Right ventricle myocardium superior (tissue), 1 donor: ENCODE measurements at regions of chr18 and their contacts with region 1.

Region 1: GRCh38 chr18:24118750-24119577 is 19.9 kb upstream of the CABYR start:
- DNase-seq: peak; percentile 69
- ATAC-seq: peak; percentile 88

Region 2: DNA sequence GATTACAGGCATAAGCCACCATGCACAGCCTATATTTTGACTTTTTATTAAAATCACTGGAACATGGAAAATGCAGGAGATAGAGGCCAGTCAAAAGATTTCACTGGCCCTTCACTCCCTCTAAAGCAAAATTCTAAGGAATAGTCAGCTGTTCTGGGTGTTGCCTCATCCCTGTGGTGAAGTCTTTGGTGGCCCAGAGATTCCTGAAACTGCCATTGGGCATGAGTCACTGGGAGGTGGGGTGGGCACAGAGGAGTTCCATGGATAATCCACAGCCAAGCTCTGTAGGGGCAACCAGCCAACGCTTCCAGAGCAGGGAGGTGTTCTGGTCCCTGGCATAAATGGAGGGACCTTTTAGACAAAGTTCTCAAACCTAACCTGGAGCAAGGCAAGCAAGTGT is 194.2 kb before region 1 on chr18:
- intact Hi-C with region 1: loop called (anchors 10 kb)
- DNase-seq: no peak
- ATAC-seq: no peak

Region 3: DNA sequence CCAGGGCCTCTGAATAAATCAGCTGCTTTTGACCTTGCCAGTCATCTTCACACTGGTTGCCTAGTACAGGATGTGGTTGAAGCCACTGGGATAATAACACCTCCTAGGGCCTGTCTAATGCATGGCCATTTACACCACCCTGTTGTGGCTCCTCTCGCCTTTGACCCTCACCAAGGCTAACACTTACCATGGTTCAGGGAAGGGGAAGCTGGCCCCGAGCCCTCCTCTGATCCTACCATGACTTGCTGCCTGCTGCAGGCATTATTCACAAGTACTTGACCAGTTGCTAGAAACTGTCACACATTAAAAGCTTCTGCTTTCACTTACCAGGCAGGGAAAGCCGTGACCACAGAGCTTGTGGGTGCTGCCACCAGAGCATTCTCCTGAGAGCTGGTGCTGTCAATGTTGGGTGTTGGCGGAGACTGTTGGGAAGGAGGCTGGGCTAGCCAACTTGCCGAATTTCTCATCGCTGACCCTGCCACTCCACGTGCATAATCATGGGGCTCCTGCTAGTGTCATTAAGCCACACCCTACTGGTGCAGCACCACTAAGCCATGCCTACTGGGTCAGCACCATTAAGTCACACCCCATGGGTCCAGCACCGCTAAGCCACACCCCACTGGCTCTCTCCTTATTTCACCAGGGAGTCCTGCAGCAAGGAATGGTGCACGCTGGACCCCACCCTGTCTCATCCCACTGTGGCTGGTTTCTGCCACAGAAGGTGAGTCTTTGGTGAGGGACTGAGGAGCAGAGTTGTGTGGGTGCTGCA is 151.5 kb before region 1 on chr18:
- intact Hi-C with region 1: loop called (anchors 10 kb)
- DNase-seq: no peak
- ATAC-seq: no peak